ENCODE measurements at regions of chr7 and their contacts with region 1.

Region 1: DNA sequence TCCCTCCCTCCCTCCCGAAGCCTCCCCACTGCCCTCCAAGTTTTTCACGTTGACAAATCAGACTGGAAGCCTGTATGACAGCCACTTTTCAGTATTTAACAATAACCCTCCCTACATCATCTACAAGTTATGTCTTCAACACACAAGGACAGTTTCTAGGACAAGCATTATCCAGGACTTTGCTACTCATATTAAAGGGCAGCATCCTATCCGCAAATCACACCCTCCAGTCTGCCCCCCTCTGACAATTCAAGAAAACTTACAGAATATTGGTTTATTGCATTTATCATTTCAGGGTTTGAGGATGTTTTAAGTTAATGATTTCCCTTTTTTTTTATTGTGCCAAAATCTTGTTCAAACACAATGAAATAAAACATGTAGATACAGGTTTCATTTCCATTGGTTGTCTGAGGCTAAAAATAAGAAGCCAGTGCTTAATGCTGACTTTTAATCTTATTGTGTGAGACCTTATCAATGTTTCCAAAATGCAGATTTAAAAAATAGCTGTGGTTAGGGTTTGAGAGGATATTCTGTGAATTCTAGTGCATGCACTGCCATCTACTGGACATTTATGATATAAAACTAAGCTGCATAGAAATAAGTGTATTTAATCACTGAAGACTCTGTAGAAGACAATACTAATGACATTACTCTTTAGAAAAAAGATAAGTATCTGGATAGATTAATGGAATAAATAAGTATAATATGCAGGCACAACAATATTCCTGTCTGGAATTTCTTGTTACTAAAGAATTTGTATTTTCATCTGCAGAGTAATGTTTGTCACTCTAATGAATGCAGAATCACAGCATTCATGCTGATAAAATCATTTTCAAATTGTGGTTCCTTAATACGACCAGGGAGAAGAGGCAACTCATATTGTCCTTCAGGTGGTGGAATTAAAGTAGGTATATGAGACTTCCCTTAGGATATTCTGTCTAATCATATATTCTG is 64.1 kb downstream of the CAV1 start:
- DNase-seq: no peak
- ATAC-seq: peak in 7 of 8 donors; percentile 39 to 74 (median 65)
- H3K4me3 ChIP-seq: no peak overlapping the region
- H3K27ac ChIP-seq: peak overlapping the region in 7 of 10 donors; percentile 42 to 71 (median 51)
- H3K4me1 ChIP-seq: peaks cover 0 to 43% (median 34%) of the 10 kb centered on the region in 9 donors
- H3K27me3 ChIP-seq: peaks cover 0 to 19% (median 0%) of the 10 kb centered on the region in 7 donors
- CTCF ChIP-seq: peak; percentile 47 to 87 (median 74)

Region 2: GRCh38 chr7:116180302-116180701 is 408.6 kb before region 1 on chr7:
- intact Hi-C with region 1: loop called in 6 of 10 experiments (anchors 5 to 10 kb)
- DNase-seq: peak in 1 of 2 donors; percentile 14
- ATAC-seq: peak in 6 of 8 donors; percentile 42 to 78 (median 58)
- H3K4me3 ChIP-seq: no peak overlapping the region
- H3K27ac ChIP-seq: no peak overlapping the region
- H3K4me1 ChIP-seq: no peaks in the 10 kb centered on the region
- H3K27me3 ChIP-seq: no peaks in the 10 kb centered on the region
- CTCF ChIP-seq: peak; percentile 61 to 88 (median 79)

Region 3: DNA sequence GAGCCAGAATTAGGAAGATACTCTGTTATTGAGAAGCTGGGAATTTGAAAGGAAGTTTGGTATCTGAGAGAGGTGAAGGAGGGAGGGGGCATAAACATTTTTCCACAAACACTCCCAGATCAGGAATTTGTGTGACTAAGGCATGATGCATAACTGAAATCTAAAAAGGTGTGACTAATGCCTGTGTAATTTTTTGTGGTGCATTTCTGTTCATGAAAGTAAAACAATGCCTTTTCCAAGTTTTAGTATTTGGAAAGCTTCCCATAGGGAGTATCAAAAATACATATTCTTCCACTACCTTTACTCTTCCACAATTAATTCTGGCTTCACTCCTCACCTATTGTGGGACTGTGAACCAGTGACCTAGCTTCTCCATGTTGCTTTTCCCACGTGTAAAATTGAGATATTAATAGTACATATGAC is 145.8 kb before region 1 on chr7:
- intact Hi-C with region 1: loop called in 6 of 10 experiments (anchors 5 to 10 kb)
- DNase-seq: no peak
- ATAC-seq: peak in 3 of 8 donors; percentile 17 to 50 (median 19)
- H3K4me3 ChIP-seq: no peak overlapping the region
- H3K27ac ChIP-seq: peak overlapping the region in 7 of 10 donors; percentile 11 to 79 (median 50)
- H3K4me1 ChIP-seq: peaks cover 7 to 76% (median 36%) of the 10 kb centered on the region in 9 donors
- H3K27me3 ChIP-seq: no peaks in the 10 kb centered on the region
- CTCF ChIP-seq: no peak

Region 4: GRCh38 chr7:116511552-116512519 is 77.1 kb before region 1 on chr7:
- intact Hi-C with region 1: no loop called
- DNase-seq: peak in 1 of 2 donors; percentile 58
- ATAC-seq: peak; percentile 74 to 93 (median 89)
- H3K4me3 ChIP-seq: peak overlapping the region; percentile 19 to 56 (median 48)
- H3K27ac ChIP-seq: peak overlapping the region; percentile 66 to 93 (median 85)
- H3K4me1 ChIP-seq: peaks cover 14 to 73% (median 41%) of the 10 kb centered on the region in 9 donors
- H3K27me3 ChIP-seq: no peaks in the 10 kb centered on the region
- CTCF ChIP-seq: no peak

Region 5: DNA sequence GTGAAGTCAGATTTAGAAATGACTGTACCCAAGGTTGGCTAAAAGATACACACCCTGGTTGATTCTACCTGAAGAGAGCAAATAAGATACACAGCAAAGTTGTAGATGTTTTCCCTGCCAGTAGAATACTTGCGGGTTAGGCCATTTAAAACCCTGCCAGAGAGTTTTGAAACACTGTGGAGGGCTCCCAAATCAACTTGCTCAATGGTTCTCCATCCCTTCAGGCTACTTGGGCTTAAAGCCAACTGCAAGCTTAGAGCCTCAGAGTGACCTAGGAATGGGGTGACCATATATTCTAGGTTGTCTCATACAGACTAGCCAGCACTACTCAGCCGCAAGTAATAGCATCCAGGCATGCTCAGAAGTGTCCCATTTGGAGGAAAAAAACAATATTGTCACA is 54.1 kb before region 1 on chr7:
- intact Hi-C with region 1: loop called in 5 of 10 experiments (anchors 5 to 10 kb)
- DNase-seq: no peak
- ATAC-seq: peak in 3 of 8 donors; percentile 12 to 65 (median 50)
- H3K4me3 ChIP-seq: peak overlapping the region in 5 of 10 donors; percentile 6 to 25 (median 15)
- H3K27ac ChIP-seq: peak overlapping the region in 7 of 10 donors; percentile 3 to 71 (median 32)
- H3K4me1 ChIP-seq: peaks cover 6 to 97% (median 82%) of the 10 kb centered on the region in 9 donors
- H3K27me3 ChIP-seq: no peaks in the 10 kb centered on the region
- CTCF ChIP-seq: no peak

Region 6: GRCh38 chr7:116809636-116810266 is 220.8 kb after region 1 on chr7:
- intact Hi-C with region 1: loop called in 8 of 10 experiments (anchors 1 to 5 kb)
- DNase-seq: peak in 1 of 2 donors; percentile 51
- ATAC-seq: peak in 7 of 8 donors; percentile 55 to 80 (median 68)
- H3K4me3 ChIP-seq: no peak overlapping the region
- H3K27ac ChIP-seq: no peak overlapping the region
- H3K4me1 ChIP-seq: peaks cover 0 to 17% (median 0%) of the 10 kb centered on the region in 9 donors
- H3K27me3 ChIP-seq: no peaks in the 10 kb centered on the region
- CTCF ChIP-seq: peak; percentile 55 to 83 (median 71)

Region 7: GRCh38 chr7:116876664-116877442 is 287.9 kb after region 1 on chr7:
- intact Hi-C with region 1: no loop called
- DNase-seq: peak; percentile 61 to 87
- ATAC-seq: peak; percentile 79 to 93 (median 91)
- H3K4me3 ChIP-seq: peak overlapping the region in 3 of 10 donors; percentile 1 to 3 (median 1)
- H3K27ac ChIP-seq: peak overlapping the region; percentile 1 to 77 (median 64)
- H3K4me1 ChIP-seq: peaks cover 3 to 96% (median 78%) of the 10 kb centered on the region in 9 donors
- H3K27me3 ChIP-seq: no peaks in the 10 kb centered on the region
- CTCF ChIP-seq: peak in 4 of 9 donors; percentile 8 to 54 (median 44)